Mammary epithelial cell (primary cell): ENCODE measurements at regions of chr3 and their contacts with region 1.

Region 1: GRCh38 chr3:123605789-123606234 is 21.0 kb upstream of the HACD2 start:
- DNase-seq: peak; percentile 91
- H3K4me3 ChIP-seq: no peak overlapping the region
- H3K27ac ChIP-seq: peak overlapping the region; percentile 78
- H3K4me1 ChIP-seq: peaks cover 54% of the 10 kb centered on the region
- H3K27me3 ChIP-seq: no peaks in the 10 kb centered on the region
- CTCF ChIP-seq: no peak

Region 2: DNA sequence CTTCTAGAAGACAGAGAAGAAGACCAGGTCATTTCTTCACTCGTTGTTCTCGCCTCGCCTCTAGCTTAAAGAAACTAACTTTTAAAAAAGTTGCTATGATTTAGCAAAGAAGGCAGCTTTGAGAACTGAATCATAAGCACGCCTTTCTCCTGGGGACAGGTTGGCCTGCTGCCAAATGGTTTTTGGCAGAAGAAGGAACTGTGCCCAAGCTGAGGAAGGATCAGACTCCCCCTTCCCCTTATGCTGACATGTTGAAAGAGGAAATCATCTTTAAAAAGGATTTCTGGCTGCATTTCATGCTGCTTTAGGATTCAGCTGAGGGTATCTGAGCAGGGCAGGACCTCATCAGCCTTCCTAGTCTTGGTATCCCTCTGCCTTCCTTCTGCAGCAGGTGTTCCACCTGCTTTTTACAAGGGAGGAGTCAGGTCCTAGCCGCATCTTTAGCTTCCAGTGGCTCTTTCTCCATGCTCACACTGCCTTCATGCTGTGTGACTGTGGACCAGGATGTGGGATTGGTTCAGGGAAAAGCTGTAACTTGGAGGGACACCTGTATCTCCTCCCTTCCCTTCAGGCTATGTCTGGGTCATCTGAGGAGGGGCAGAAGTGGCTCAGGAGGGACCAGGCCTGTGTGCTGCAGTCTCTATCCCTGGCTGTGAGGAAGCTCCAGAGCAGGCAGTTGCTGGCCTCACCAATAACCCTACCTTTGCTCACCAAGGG is 13.1 kb after region 1 on chr3:
- CTCF ChIA-PET with region 1: no interaction called
- dilution Hi-C with region 1: no loop called
- in situ Hi-C with region 1: no loop called
- intact Hi-C with region 1: loop called (anchors 2 kb)
- DNase-seq: peak; percentile 53
- H3K4me3 ChIP-seq: peak overlapping the region in 1 of 3 experiments; percentile 28
- H3K27ac ChIP-seq: no peak overlapping the region
- H3K4me1 ChIP-seq: peaks cover 59% of the 10 kb centered on the region
- H3K27me3 ChIP-seq: no peaks in the 10 kb centered on the region
- CTCF ChIP-seq: no peak